ENCODE measurements at regions of chr10 and their contacts with region 1.

Region 1: GRCh38 chr10:94362360-94363250 is at the start of gene NOC3L:
- DNase-seq: peak; percentile 87 to 98 (median 96)
- ATAC-seq: peak; percentile 92
- H3K4me3 ChIP-seq: peak within 1 kb of the TSS; percentile 75 to 89
- H3K4me3 Mint-ChIP-seq: peak within 1 kb of the TSS; percentile 97
- H3K27ac ChIP-seq: peak within 1 kb of the TSS; percentile 66 to 89
- H3K27ac Mint-ChIP-seq: peak within 1 kb of the TSS; percentile 99
- H3K4me1 ChIP-seq: peaks cover 19% of the 10 kb centered on the region
- H3K4me1 Mint-ChIP-seq: peaks cover 40% of the 10 kb centered on the region
- H3K27me3 ChIP-seq: no peaks in the 10 kb centered on the region
- H3K27me3 Mint-ChIP-seq: peaks cover 5% of the 10 kb centered on the region
- CTCF ChIP-seq: peak; percentile 65
- total RNA-seq, gene NOC3L: 7.4 to 8.3 TPM

Region 2: DNA sequence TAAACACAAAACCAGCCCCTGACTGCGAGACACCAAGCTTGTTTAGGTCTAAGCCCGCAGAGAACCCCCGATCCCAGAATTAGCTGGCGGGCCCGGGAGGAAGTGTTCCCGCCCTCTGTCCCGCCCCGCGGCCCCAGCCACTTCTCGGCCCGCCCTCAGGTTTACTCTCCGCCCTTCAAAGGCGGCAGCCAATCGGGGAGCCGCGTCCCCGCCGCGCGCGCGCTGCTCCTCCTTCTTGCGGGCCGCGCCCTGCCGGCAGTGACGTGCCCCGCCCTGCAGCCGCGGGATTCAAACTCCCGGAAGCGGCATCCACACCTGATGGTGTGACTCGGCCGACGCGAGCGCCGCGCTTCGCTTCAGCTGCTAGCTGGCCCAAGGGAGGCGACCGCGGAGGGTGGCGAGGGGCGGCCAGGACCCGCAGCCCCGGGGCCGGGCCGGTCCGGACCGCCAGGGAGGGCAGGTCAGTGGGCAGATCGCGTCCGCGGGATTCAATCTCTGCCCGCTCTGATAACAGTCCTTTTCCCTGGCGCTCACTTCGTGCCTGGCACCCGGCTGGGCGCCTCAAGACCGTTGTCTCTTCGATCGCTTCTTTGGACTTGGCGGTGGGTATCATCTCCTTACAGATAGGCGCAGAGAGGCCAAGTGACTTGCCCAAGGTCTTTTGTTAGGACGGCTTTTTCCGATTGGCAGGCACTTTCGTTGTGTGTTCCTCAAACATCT is 866.1 kb before region 1 on chr10 and contains the start of gene CEP55:
- CTCF ChIA-PET with region 1: no interaction called
- POLR2A ChIA-PET with region 1: no interaction called
- intact Hi-C with region 1: loop called (anchors 2 to 5 kb)
- DNase-seq: peak; percentile 90 to 96 (median 95)
- ATAC-seq: peak; percentile 99
- H3K4me3 ChIP-seq: peak within 1 kb of the TSS; percentile 87 to 97
- H3K4me3 Mint-ChIP-seq: peak within 1 kb of the TSS; percentile 90
- H3K27ac ChIP-seq: peak within 1 kb of the TSS in 1 of 2 experiments; percentile 54
- H3K27ac Mint-ChIP-seq: no peak within 1 kb of the TSS
- H3K4me1 ChIP-seq: peaks cover 10% of the 10 kb centered on the region
- H3K4me1 Mint-ChIP-seq: peaks cover 14% of the 10 kb centered on the region
- H3K27me3 ChIP-seq: no peaks in the 10 kb centered on the region
- H3K27me3 Mint-ChIP-seq: peaks cover 10% of the 10 kb centered on the region
- CTCF ChIP-seq: no peak
- total RNA-seq, gene CEP55: 0.16 TPM in 1 of 2 experiments, not detected in the other

Region 3: GRCh38 chr10:93702211-93703001 is 660.2 kb before region 1 on chr10 and contains the start of gene FRA10AC1:
- CTCF ChIA-PET with region 1: no interaction called
- POLR2A ChIA-PET with region 1: no interaction called
- intact Hi-C with region 1: loop called (anchors 2 to 5 kb)
- DNase-seq: peak; percentile 73 to 94 (median 89)
- ATAC-seq: peak; percentile 83
- H3K4me3 ChIP-seq: peak within 1 kb of the TSS; percentile 90 to 96
- H3K4me3 Mint-ChIP-seq: no peak within 1 kb of the TSS
- H3K27ac ChIP-seq: peak within 1 kb of the TSS; percentile 82 to 86
- H3K27ac Mint-ChIP-seq: no peak within 1 kb of the TSS
- H3K4me1 ChIP-seq: peaks cover 14% of the 10 kb centered on the region
- H3K4me1 Mint-ChIP-seq: peaks cover 15% of the 10 kb centered on the region
- H3K27me3 ChIP-seq: no peaks in the 10 kb centered on the region
- H3K27me3 Mint-ChIP-seq: no peaks in the 10 kb centered on the region
- CTCF ChIP-seq: no peak
- total RNA-seq, gene FRA10AC1: 6.2 to 7.0 TPM

Region 4: DNA sequence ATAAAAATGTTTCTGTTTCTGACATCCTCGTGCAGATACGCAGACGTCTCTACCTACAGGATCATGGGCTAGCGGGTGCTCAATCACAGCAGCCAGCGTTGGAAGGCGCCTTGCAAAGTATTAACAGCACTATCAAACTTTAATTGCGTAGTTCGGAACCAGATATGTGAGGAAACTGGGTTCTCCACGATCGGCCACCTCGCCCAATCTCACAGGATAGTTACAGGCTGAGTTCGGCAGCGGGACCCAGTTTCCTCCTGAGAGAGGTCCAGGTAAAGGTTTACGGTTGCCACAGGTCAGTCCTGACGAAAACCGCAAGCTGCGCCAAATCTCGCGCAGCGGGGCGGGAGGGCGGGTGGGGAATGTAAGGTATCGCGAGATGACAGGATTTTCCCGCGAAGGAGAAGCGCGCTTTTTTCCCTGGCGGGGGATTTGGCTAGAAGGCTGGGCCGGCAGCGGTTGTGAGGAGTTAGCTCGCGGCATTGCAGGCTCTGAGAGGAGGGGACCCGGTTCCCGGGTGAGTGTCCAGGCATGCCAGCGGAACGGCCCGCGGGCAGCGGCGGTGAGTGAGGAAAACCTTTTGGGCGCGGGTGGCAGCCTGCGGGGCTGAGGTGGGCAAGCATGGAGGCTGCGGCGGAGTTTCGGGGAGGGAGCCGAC is 182.9 kb after region 1 on chr10 and contains the start of gene HELLS:
- CTCF ChIA-PET with region 1: no interaction called
- POLR2A ChIA-PET with region 1: no interaction called
- intact Hi-C with region 1: loop called (anchors 2 to 10 kb)
- DNase-seq: peak; percentile 17 to 83 (median 63)
- ATAC-seq: peak; percentile 76
- H3K4me3 ChIP-seq: peak within 1 kb of the TSS; percentile 90
- H3K4me3 Mint-ChIP-seq: peak within 1 kb of the TSS; percentile 93
- H3K27ac ChIP-seq: peak within 1 kb of the TSS; percentile 70 to 71
- H3K27ac Mint-ChIP-seq: peak within 1 kb of the TSS; percentile 93
- H3K4me1 ChIP-seq: peaks cover 18% of the 10 kb centered on the region
- H3K4me1 Mint-ChIP-seq: peaks cover 23% of the 10 kb centered on the region
- H3K27me3 ChIP-seq: no peaks in the 10 kb centered on the region
- H3K27me3 Mint-ChIP-seq: no peaks in the 10 kb centered on the region
- CTCF ChIP-seq: no peak
- total RNA-seq, gene HELLS: 8.7 to 9.1 TPM

Measured in CD8-positive, alpha-beta T cell (primary cell).